PC-3 (cell line): ENCODE measurements at regions of chr2 and their contacts with region 1.

Region 1: DNA sequence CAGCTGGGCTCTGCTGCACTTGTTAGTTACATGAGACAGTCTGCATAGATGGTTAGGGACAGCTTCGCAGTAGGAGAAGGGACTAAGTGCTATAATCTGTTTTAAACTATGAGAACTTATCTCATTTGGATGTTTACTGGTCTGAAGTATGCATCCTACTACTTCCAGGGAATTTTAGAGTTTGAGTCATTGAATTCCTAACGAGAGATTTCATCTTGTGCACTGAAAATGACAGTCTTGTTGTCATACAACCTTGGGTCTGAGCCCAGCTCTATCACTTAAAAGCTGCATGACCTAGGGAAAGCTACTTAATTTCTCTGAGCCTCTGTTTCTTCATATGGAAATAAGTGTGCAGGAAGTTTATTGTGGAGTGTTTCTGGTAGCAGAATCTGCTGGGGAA is 78.4 kb downstream of the TRIM43 start:
- DNase-seq: peak; percentile 46
- ATAC-seq: peak; percentile 27; the same call in 1 of the 2 replicates
- H3K4me3 ChIP-seq: no peak overlapping the region
- H3K27ac ChIP-seq: no peak overlapping the region
- H3K4me1 ChIP-seq: no peaks in the 10 kb centered on the region
- H3K27me3 ChIP-seq: no peaks in the 10 kb centered on the region
- CTCF ChIP-seq: no peak

Region 2: DNA sequence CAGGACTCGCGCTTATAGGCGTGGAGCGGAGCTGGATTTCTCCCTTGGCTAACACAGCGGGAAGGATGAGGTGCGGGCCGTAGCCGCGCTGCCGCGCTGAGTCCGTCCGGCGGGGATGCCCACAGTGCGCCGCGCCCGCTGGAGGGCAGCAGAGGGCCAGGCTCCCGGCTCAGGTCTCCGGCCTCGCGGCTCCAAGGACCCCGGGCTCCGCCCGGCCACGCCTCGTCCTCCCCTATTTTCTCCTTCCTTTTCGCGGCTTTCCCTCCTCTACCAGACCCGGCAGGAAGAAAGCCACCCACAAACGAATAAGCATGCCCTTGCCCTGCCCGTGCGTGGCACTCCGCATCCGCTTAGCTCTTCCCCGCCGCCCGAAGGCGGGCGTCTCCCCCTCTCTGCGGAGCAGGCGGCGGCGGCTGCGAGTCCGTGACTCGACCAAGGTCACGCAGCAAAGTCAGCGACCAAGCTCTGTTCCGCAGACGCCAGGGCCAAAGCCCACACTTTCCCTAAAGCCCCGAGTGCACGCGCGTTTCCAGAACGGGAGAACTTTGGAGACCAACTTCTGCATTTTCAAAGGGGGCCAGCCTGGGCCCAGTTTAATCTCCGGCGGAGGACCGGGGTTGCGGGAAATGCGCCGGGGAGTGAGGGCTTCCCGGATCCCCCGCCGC is 324.5 kb before region 1 on chr2:
- CTCF ChIA-PET with region 1: no interaction called
- POLR2A ChIA-PET with region 1: no interaction called
- intact Hi-C with region 1: no loop called
- DNase-seq: peak; percentile 87
- ATAC-seq: peak; percentile 87
- H3K4me3 ChIP-seq: peak overlapping the region; percentile 84
- H3K27ac ChIP-seq: peak overlapping the region; percentile 83
- H3K4me1 ChIP-seq: peaks cover 25% of the 10 kb centered on the region
- H3K27me3 ChIP-seq: no peaks in the 10 kb centered on the region
- CTCF ChIP-seq: peak; percentile 82

Region 3: DNA sequence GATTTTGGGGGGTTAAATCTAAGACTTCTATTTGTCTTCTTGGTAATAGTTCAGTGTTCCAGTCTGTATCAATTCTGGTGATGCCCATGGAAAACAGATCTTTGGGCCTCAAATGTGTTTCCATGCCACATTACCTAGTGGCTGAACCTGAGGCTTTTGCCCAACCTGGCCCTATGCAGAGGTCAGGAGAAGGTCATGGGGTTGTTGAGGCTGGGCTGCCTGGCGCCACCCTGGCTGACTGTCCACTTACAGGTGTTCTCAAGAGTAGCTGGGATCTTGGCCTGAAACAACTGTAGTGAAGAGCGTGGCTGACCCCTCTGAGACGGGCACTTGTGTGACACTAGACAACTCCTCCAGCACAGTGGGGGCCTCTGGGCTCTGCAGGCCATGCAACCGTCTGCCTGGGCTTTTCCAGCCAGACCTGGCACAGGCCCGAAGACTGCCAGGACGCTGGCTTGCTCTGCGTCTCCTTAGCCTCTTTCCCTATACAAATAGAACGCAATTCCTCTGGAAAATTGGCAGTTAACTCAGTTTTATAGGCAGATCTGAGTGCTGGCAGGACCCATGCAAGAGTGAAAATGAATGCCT is 49.4 kb after region 1 on chr2:
- CTCF ChIA-PET with region 1: no interaction called
- POLR2A ChIA-PET with region 1: no interaction called
- intact Hi-C with region 1: loop called (anchors 5 kb)
- DNase-seq: no peak
- ATAC-seq: no peak
- H3K4me3 ChIP-seq: no peak overlapping the region
- H3K27ac ChIP-seq: no peak overlapping the region
- H3K4me1 ChIP-seq: no peaks in the 10 kb centered on the region
- H3K27me3 ChIP-seq: no peaks in the 10 kb centered on the region
- CTCF ChIP-seq: no peak